Activated CD4-positive, alpha-beta T cell treated with anti-CD3 and anti-CD28 coated beads, Interleukin-2, amount 10 ng/mL, durations not matched to agents 24 days and 14 days (primary cell): ENCODE measurements at regions of chr1 and their contacts with region 1.

Region 1: DNA sequence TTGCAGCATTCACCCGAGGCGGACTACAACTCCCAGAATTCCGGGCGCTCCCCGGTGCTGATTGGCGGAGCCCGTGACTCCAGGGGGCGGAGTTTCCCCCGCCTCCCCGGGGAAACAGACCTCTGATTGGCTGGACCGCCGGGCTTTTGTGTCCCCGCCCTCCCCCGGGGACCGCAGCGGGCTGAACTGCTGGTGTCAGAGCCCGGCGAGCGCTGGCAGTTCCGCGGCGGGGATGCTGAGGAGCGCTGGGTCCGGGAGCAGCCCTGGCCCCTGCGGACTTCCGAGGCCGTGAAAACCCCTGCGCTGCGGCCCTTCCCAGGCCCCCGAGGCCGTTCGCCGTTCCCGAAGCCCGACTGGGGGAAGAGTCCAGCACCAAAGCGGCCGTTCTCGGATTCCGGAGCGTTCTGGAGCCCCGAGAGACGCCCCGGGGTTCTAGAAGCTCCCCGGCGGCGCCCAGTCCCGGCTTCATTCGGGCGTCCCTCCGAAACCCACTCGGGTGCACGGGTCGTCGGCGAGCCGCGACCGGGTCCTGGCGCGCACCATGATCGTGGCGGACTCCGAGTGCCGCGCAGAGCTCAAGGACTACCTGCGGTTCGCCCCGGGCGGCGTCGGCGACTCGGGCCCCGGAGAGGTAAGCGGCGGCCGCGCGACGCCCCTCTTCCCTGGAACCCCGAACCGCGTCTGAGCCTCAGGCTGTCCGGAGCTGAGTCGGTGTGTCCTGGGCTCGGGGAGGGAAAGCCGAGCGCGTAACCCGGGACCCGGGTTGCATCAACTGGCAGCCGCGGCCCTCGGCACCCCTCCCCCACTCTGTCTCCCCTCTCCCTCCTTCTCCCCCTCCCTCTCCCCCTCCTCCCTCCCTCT is at the start of gene SESN2:
- DNase-seq: peak; percentile 100
- H3K4me3 Mint-ChIP-seq: peak within 1 kb of the TSS; percentile 78
- H3K27ac Mint-ChIP-seq: peak within 1 kb of the TSS; percentile 86
- H3K4me1 Mint-ChIP-seq: peaks cover 34% of the 10 kb centered on the region
- H3K27me3 Mint-ChIP-seq: no peaks in the 10 kb centered on the region
- total RNA-seq, gene SESN2: 14.1 and 14.8 TPM in 2 replicates

Region 2: DNA sequence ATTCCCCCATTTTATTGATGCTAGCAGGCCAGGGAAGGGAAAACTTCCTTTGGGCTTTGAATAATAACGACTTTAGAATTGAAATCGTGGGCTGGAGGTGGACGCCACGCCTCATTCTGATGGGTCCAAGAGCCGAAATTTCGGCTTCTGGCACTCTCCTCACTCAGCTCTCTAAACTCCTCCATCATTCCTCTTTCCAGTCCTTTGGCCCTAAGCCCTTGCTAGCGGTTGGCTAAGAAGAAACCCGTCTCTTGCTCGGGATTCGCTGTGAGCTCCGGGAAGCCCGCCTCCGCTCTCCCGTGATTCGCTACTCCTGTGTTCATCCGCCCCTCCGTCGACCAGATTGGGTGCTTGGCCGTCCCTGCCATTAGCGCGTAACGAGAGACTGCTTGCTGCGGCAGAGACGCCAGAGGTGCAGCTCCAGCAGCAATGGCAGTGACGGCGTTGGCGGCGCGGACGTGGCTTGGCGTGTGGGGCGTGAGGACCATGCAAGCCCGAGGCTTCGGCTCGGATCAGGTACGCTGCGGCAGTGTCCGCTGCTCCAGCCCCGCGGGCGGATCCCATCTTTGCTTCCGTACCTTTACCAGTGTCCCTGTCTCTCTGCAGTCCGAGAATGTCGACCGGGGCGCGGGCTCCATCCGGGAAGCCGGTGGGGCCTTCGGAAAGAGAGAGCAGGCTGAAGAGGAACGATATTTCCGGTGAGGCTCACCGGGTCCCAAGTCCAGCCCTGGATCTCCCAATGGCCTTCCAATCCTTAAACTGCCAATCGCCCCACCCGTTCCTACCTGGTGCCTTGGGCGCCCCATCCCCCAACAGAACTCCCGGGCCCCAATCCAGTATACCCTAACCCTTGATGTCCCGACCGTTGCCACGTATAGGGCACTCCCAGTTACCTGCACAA is 23.5 kb before region 1 on chr1 and contains the start of gene ATP5IF1:
- intact Hi-C with region 1: loop called (anchors 1 kb)
- DNase-seq: peak; percentile 98
- H3K4me3 Mint-ChIP-seq: no peak within 1 kb of the TSS
- H3K27ac Mint-ChIP-seq: no peak within 1 kb of the TSS
- H3K4me1 Mint-ChIP-seq: peaks cover 11% of the 10 kb centered on the region
- H3K27me3 Mint-ChIP-seq: no peaks in the 10 kb centered on the region
- total RNA-seq, gene ATP5IF1: 139 and 142 TPM in 2 replicates

Region 3: GRCh38 chr1:28280501-28280900 is 21.0 kb after region 1 on chr1:
- intact Hi-C with region 1: no loop called
- DNase-seq: no peak
- H3K4me3 Mint-ChIP-seq: no peak overlapping the region
- H3K27ac Mint-ChIP-seq: no peak overlapping the region
- H3K4me1 Mint-ChIP-seq: peaks cover 2% of the 10 kb centered on the region
- H3K27me3 Mint-ChIP-seq: no peaks in the 10 kb centered on the region

Region 4: GRCh38 chr1:28329395-28330153 is 70.0 kb after region 1 on chr1:
- intact Hi-C with region 1: loop called (anchors 2 kb)
- DNase-seq: no peak
- H3K4me3 Mint-ChIP-seq: peak overlapping the region; percentile 96
- H3K27ac Mint-ChIP-seq: peak overlapping the region; percentile 98
- H3K4me1 Mint-ChIP-seq: peaks cover 33% of the 10 kb centered on the region
- H3K27me3 Mint-ChIP-seq: peaks cover 2% of the 10 kb centered on the region